Left colon (tissue), 2 donors: ENCODE measurements at regions of chr22 and their contacts with region 1.

Region 1: GRCh38 chr22:44697423-44698141 is 4.4 kb upstream of the PRR5 start:
- DNase-seq: peak; percentile 67 to 91
- ATAC-seq: peak; percentile 45

Region 2: DNA sequence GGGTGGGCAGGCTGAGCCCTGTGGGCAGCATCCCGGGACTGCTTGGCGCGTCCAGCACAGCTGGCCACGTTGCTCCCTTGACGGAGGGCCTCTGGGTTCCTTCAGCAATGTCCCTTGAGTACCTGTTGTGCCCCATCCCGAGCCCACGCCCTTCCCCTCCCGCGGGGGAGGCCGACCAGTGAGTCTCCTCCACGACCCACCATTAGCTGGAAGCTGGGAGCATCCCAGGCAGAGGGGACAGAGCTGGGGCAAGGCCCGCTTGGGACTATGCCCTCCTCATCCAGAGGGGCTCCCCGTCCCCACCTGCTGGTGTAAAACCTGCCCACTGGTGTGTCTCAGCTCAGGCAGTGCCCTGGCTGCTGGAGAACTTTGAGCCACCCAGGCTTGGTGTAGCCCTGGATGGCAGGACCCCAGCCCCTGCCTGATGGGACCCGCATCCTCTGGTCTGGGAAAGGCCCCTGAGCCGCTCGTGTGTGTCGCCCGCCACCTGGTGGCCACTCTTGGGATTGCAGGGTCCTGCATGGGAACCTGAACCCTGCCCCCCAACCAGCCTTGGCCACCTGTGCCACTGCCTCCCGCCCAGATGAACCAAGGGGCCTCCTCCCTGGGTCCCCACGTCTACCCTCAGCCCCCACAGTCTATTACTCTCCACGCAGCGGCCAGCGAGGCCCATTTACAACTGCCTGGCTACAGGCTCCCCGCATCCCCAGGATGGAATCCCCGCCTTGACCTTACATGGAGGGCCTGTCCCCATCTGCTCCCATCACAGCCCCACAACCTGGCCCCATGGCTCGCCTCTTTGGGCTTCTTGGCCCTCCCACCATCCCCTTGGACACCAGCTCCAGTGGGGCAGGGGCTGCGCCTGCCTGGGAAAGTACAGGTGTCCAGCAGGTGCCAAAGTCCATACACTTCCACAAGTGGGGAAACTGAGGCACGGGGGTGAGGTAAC is 38.2 kb after region 1 on chr22:
- intact Hi-C with region 1: loop called (anchors 5 kb)
- DNase-seq: peak in 1 of 2 donors; percentile 90
- ATAC-seq: peak; percentile 49

Region 3: GRCh38 chr22:44753544-44754194 is 56.1 kb after region 1 on chr22:
- intact Hi-C with region 1: no loop called
- DNase-seq: peak in 1 of 2 donors; percentile 32
- ATAC-seq: peak; percentile 6